ENCODE measurements at regions of chr12 and their contacts with region 1.

Region 1: GRCh38 chr12:3998968-3999826 is 126.0 kb upstream of the PARP11 start:
- DNase-seq: peak in 2 of 4 donors; percentile 73 to 85
- ATAC-seq: peak; percentile 85
- H3K4me3 ChIP-seq: no peak overlapping the region
- H3K27ac ChIP-seq: peak overlapping the region; percentile 53 to 58
- H3K4me1 ChIP-seq: no peaks in the 10 kb centered on the region
- H3K27me3 ChIP-seq: no peaks in the 10 kb centered on the region
- CTCF ChIP-seq: no peak

Region 2: GRCh38 chr12:4037747-4038312 is 38.6 kb after region 1 on chr12:
- intact Hi-C with region 1: loop called in 1 of 2 experiments (anchors 5 kb)
- DNase-seq: peak in 2 of 4 donors; percentile 43 to 73
- ATAC-seq: peak; percentile 69
- H3K4me3 ChIP-seq: no peak overlapping the region
- H3K27ac ChIP-seq: no peak overlapping the region
- H3K4me1 ChIP-seq: peaks cover 0 to 4% of the 10 kb centered on the region in 2 donors
- H3K27me3 ChIP-seq: no peaks in the 10 kb centered on the region
- CTCF ChIP-seq: peak; percentile 60 to 63

Region 3: DNA sequence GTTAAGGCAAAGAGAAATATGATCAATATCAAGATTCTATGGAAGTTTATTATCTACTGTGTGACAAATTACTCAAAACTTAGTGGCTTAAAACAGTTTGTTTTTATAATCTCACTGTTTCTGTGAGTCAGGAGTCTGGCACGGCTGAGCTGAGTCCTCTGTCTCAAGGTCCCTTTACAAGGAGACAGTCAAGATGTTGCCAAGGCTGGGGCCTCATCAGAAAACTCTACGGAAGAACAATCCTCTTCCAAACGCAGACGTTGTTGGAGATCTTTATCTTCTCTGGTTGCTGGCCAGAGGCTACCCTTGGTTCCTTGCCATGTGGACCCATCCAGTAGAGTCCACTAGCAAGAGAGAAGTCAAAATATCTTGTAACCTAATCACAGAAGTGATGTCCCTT is 173.8 kb after region 1 on chr12:
- intact Hi-C with region 1: no loop called
- DNase-seq: no peak
- ATAC-seq: no peak
- H3K4me3 ChIP-seq: no peak overlapping the region
- H3K27ac ChIP-seq: peak overlapping the region in 1 of 2 donors; percentile 55
- H3K4me1 ChIP-seq: peaks cover 0 to 16% of the 10 kb centered on the region in 2 donors
- H3K27me3 ChIP-seq: no peaks in the 10 kb centered on the region
- CTCF ChIP-seq: no peak